ENCODE measurements at regions of chr2 and their contacts with region 1.

Region 1: DNA sequence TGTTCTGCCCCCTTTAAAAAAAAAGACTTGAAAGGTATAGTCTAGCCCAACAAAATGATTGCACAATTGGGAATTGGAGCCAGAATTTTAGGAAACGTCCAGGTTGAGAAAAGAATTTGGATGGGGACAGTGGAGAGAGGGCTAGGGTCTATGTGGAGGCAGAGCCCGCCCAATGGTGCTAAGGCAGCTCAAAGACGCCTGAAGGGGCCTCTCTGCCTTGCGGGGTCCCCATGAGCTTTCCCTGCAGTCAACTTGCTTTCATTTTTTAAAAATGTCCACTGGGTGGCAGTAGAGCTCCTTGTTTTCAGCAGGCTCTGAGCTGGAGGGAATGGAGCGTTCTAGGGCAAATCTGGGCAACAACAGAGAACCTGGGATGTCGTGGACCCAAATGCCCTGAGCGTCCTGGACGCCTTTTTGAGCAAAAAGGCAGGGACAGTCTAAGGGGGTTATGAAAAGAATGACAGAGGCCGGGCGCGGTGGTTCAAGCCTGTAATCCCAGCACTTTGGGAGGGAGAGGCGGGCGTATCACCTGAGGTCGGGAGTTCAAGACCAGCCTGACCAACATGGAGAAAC is 40.2 kb upstream of the ITM2C start:
- DNase-seq: peak in 1 of 2 donors; percentile 24
- ATAC-seq: peak; percentile 66 to 85 (median 72)
- H3K4me3 ChIP-seq: peak overlapping the region; percentile 39
- H3K27ac ChIP-seq: no peak overlapping the region
- H3K4me1 ChIP-seq: no peaks in the 10 kb centered on the region
- H3K27me3 ChIP-seq: peaks cover 0 to 30% (median 10%) of the 10 kb centered on the region in 3 donors
- CTCF ChIP-seq: peak; percentile 70

Region 2: GRCh38 chr2:230680463-230681170 is 143.9 kb before region 1 on chr2:
- intact Hi-C with region 1: no loop called
- DNase-seq: no peak
- ATAC-seq: peak in 2 of 4 donors; percentile 25 to 58
- H3K4me3 ChIP-seq: no peak overlapping the region
- H3K27ac ChIP-seq: no peak overlapping the region
- H3K4me1 ChIP-seq: no peaks in the 10 kb centered on the region
- H3K27me3 ChIP-seq: no peaks in the 10 kb centered on the region
- CTCF ChIP-seq: no peak

Region 3: GRCh38 chr2:230798769-230799399 is 25.6 kb before region 1 on chr2:
- intact Hi-C with region 1: no loop called
- DNase-seq: no peak
- ATAC-seq: peak in 3 of 4 donors; percentile 45 to 70 (median 53)
- H3K4me3 ChIP-seq: no peak overlapping the region
- H3K27ac ChIP-seq: peak overlapping the region; percentile 80
- H3K4me1 ChIP-seq: peaks cover 52% of the 10 kb centered on the region
- H3K27me3 ChIP-seq: no peaks in the 10 kb centered on the region
- CTCF ChIP-seq: peak; percentile 71

Region 4: GRCh38 chr2:230987137-230988020 is 162.9 kb after region 1 on chr2:
- intact Hi-C with region 1: loop called (anchors 1 kb)
- DNase-seq: peak; percentile 83 to 89
- ATAC-seq: peak; percentile 87 to 98 (median 90)
- H3K4me3 ChIP-seq: peak overlapping the region; percentile 54
- H3K27ac ChIP-seq: no peak overlapping the region
- H3K4me1 ChIP-seq: peaks cover 4% of the 10 kb centered on the region
- H3K27me3 ChIP-seq: peaks cover 0 to 35% (median 4%) of the 10 kb centered on the region in 3 donors
- CTCF ChIP-seq: peak; percentile 97

Region 5: DNA sequence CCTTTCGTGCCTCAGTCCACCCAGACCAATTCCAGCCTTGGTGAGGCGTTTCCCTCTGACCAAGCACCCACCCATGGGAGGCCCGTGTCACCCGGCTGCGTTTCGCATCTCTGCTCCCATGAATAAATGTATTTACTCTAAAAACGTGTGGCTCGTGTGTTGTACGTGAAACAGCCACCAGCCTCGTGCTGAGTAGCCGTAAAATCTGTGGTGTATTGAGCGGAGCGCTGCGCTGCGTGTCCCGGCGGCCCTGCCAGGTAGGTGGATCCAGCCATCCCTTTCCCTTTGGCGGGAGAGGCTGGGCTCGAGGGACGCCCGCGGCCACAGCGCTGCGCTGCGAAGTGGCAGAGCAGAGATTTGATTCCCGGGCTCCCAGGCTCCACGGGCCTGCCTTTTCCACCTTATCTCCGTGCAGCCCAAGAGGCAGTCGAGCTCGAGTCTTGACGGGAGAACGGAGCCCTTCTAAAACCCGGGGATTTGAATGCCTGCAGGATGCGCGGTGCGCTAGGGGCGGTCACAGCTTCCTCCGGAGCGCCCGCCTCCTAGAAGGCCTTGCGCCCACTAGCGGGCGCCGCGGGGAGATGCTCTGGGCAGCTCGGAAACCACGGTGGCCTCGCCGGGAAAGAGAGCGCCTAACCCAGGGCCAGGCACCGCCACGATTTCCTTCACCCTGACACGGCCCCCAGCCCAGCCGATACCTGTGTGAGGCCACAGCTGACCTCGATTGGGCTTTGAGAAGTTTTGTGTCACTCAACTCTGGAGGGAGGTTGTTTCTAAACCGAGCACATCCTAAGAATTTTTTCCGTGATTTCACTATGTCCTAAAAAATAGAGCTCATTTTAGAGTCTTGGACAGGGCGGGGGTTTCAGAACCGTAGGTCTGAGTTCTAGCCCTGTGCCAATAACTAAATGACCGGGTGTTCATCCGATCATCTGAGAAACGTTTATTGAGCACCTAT is 228.3 kb after region 1 on chr2:
- intact Hi-C with region 1: loop called in 1 of 2 experiments (anchors 5 kb)
- DNase-seq: peak; percentile 83 to 86
- ATAC-seq: peak; percentile 55 to 73 (median 66)
- H3K4me3 ChIP-seq: peak overlapping the region; percentile 75
- H3K27ac ChIP-seq: no peak overlapping the region
- H3K4me1 ChIP-seq: peaks cover 8% of the 10 kb centered on the region
- H3K27me3 ChIP-seq: peaks cover 0 to 4% (median 2%) of the 10 kb centered on the region in 3 donors
- CTCF ChIP-seq: peak; percentile 84

Measured in psoas muscle (tissue), 8 donors.